AG04449 (cell line): ENCODE measurements at regions of chr13 and their contacts with region 1.

Region 1: DNA sequence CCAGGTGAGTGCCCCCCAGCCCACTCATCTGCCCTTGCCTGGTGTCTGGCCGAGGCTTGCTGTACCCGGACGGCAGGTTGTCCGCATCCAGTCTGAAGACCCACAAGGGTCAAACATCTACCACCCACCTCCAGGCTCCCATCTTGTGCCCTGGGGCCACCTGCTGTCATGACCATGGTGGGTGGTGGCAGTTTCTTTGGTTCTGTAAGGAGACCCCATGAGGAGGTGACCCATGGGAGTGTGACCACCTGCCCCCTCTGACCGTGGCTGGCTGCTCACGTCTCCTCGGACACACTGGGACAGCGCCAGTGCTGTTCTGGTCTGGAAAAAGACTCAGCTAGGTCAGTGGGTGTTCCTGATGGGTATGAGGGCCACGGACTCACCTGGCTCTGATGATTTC is 93.9 kb downstream of the TEX29 start:
- DNase-seq: no peak
- H3K4me3 ChIP-seq: no peak overlapping the region
- CTCF ChIP-seq: no peak

Region 2: GRCh38 chr13:111161601-111162600 is 252.4 kb before region 1 on chr13:
- CTCF ChIA-PET with region 1: no interaction called
- POLR2A ChIA-PET with region 1: no interaction called
- DNase-seq: no peak
- H3K4me3 ChIP-seq: no peak overlapping the region
- CTCF ChIP-seq: no peak

Region 3: GRCh38 chr13:111399334-111399733 is 15.0 kb before region 1 on chr13:
- CTCF ChIA-PET with region 1: no interaction called
- POLR2A ChIA-PET with region 1: no interaction called
- DNase-seq: no peak
- H3K4me3 ChIP-seq: no peak overlapping the region
- CTCF ChIP-seq: no peak

Region 4: GRCh38 chr13:111429064-111429558 is 14.8 kb after region 1 on chr13:
- CTCF ChIA-PET with region 1: interaction called, 19 read pairs
- POLR2A ChIA-PET with region 1: no interaction called
- DNase-seq: no peak
- H3K4me3 ChIP-seq: no peak overlapping the region
- CTCF ChIP-seq: peak; percentile 50